Activated CD4-positive, alpha-beta T cell treated with anti-CD3 and anti-CD28 coated beads for 36 hours (primary cell): ENCODE measurements at regions of chr14 and their contacts with region 1.

Region 1: GRCh38 chr14:53180268-53181221 is 27.4 kb upstream of the DDHD1 start:
- DNase-seq: peak; percentile 61
- ATAC-seq: peak; percentile 73
- H3K4me3 Mint-ChIP-seq: no peak overlapping the region
- H3K27ac Mint-ChIP-seq: peak overlapping the region; percentile 71
- H3K4me1 Mint-ChIP-seq: peaks cover 39% of the 10 kb centered on the region
- H3K27me3 Mint-ChIP-seq: peaks cover 2% of the 10 kb centered on the region

Region 2: GRCh38 chr14:53144244-53144643 is 36.3 kb before region 1 on chr14:
- CTCF ChIA-PET with region 1: interaction called, 4 read pairs
- POLR2A ChIA-PET with region 1: no interaction called
- intact Hi-C with region 1: loop called in 1 of 2 experiments (anchors 2 kb)
- DNase-seq: peak; percentile 18
- ATAC-seq: peak; percentile 89
- H3K4me3 Mint-ChIP-seq: no peak overlapping the region
- H3K27ac Mint-ChIP-seq: peak overlapping the region; percentile 37
- H3K4me1 Mint-ChIP-seq: peaks cover 68% of the 10 kb centered on the region
- H3K27me3 Mint-ChIP-seq: no peaks in the 10 kb centered on the region

Region 3: GRCh38 chr14:53237488-53237887 is 56.9 kb after region 1 on chr14:
- CTCF ChIA-PET with region 1: no interaction called
- POLR2A ChIA-PET with region 1: no interaction called
- intact Hi-C with region 1: no loop called
- DNase-seq: no peak
- ATAC-seq: no peak
- H3K4me3 Mint-ChIP-seq: no peak overlapping the region
- H3K27ac Mint-ChIP-seq: no peak overlapping the region
- H3K4me1 Mint-ChIP-seq: no peaks in the 10 kb centered on the region
- H3K27me3 Mint-ChIP-seq: no peaks in the 10 kb centered on the region

Region 4: GRCh38 chr14:53850714-53851296 is 670.3 kb after region 1 on chr14:
- CTCF ChIA-PET with region 1: no interaction called
- POLR2A ChIA-PET with region 1: no interaction called
- intact Hi-C with region 1: no loop called
- DNase-seq: no peak
- ATAC-seq: no peak
- H3K4me3 Mint-ChIP-seq: no peak overlapping the region
- H3K27ac Mint-ChIP-seq: no peak overlapping the region
- H3K4me1 Mint-ChIP-seq: no peaks in the 10 kb centered on the region
- H3K27me3 Mint-ChIP-seq: no peaks in the 10 kb centered on the region